CD14-positive monocyte (primary cell): ENCODE measurements at regions of chr11 and their contacts with region 1.

Region 1: GRCh38 chr11:10916674-10917073 is 58.8 kb upstream of the ZBED5 start:
- DNase-seq: peak; percentile 62 to 83 (median 81)
- H3K4me3 ChIP-seq: no peak overlapping the region
- H3K4me3 Mint-ChIP-seq: no peak overlapping the region
- H3K27ac ChIP-seq: peak overlapping the region in 1 of 2 donors; percentile 69
- H3K27ac Mint-ChIP-seq: peak overlapping the region in 6 of 7 donors; percentile 67 to 84 (median 76)
- H3K4me1 ChIP-seq: peaks cover 26 to 49% of the 10 kb centered on the region in 2 donors
- H3K4me1 Mint-ChIP-seq: peaks cover 49% of the 10 kb centered on the region
- H3K27me3 ChIP-seq: no peaks in the 10 kb centered on the region
- H3K27me3 Mint-ChIP-seq: peaks cover 1 to 4% (median 2%) of the 10 kb centered on the region in 3 donors
- CTCF ChIP-seq: no peak

Region 2: GRCh38 chr11:10857709-10858438 is 58.8 kb before region 1 on chr11 and contains the start of gene ZBED5:
- intact Hi-C with region 1: loop called in 1 of 2 experiments (anchors 5 kb)
- DNase-seq: peak; percentile 93 to 96 (median 94)
- H3K4me3 ChIP-seq: peak within 1 kb of the TSS; percentile 78 to 91 (median 91)
- H3K4me3 Mint-ChIP-seq: peak within 1 kb of the TSS; percentile 98 to 100
- H3K27ac ChIP-seq: peak within 1 kb of the TSS; percentile 94 to 95
- H3K27ac Mint-ChIP-seq: peak within 1 kb of the TSS; percentile 99 to 100 (median 99)
- H3K4me1 ChIP-seq: peaks cover 20 to 30% of the 10 kb centered on the region in 2 donors
- H3K4me1 Mint-ChIP-seq: peaks cover 21% of the 10 kb centered on the region
- H3K27me3 ChIP-seq: no peaks in the 10 kb centered on the region
- H3K27me3 Mint-ChIP-seq: peaks cover 0 to 3% (median 0%) of the 10 kb centered on the region in 3 donors
- CTCF ChIP-seq: no peak
- polyA plus RNA-seq, gene ZBED5: 8.1 to 45.8 (median 10.3) TPM

Region 3: DNA sequence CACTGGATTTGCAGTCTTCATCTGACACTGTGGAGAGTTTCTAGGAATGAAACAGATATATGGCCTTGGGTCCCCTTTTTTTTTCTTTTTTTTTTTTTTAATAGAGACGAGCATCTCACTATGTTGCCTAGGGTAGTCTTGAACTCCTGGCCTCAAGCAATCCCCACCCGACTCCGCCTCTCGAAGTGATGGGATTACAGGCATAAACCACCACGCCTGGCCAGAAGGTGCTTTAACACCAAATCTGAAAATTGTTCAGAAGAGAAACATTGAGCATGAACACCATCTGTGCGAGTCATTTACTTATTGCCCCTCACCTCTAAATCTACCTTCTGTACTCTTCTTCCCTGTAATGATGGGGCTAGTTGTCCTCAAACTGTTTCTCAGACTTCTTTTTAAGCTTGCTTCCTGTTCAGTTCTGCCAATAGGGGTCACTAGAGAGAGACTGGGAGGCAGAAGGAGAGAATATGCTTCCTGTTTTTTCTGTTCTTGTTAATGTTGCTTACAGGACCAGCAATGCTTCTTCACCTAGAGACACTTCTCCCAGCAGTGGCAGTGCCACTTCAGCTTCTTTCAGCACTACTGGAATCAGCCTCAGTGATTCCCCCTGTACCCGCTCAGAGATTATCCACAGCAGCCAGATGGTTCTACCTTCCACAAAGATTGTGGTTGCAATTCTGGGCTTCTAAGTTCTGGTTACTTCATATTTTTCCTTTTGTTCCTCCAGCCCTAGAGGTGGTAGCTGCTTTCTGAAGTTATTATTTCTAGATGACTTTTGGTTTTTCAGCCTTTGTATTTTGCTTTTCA is 38.1 kb before region 1 on chr11:
- intact Hi-C with region 1: loop called in 1 of 2 experiments (anchors 5 kb)
- DNase-seq: peak; percentile 75 to 82 (median 78)
- H3K4me3 ChIP-seq: no peak overlapping the region
- H3K4me3 Mint-ChIP-seq: no peak overlapping the region
- H3K27ac ChIP-seq: peak overlapping the region in 1 of 2 donors; percentile 61
- H3K27ac Mint-ChIP-seq: peak overlapping the region; percentile 75 to 90 (median 77)
- H3K4me1 ChIP-seq: peaks cover 3 to 7% of the 10 kb centered on the region in 2 donors
- H3K4me1 Mint-ChIP-seq: peaks cover 9% of the 10 kb centered on the region
- H3K27me3 ChIP-seq: no peaks in the 10 kb centered on the region
- H3K27me3 Mint-ChIP-seq: no peaks in the 10 kb centered on the region
- CTCF ChIP-seq: peak; percentile 86

Region 4: GRCh38 chr11:10899121-10899830 is 17.4 kb before region 1 on chr11:
- intact Hi-C with region 1: loop called in 1 of 2 experiments (anchors 2 kb)
- DNase-seq: peak; percentile 54 to 86 (median 71)
- H3K4me3 ChIP-seq: peak overlapping the region in 1 of 3 experiments; percentile 28
- H3K4me3 Mint-ChIP-seq: peak overlapping the region; percentile 41 to 46
- H3K27ac ChIP-seq: peak overlapping the region; percentile 89 to 100
- H3K27ac Mint-ChIP-seq: peak overlapping the region; percentile 99 to 100 (median 99)
- H3K4me1 ChIP-seq: peaks cover 57 to 65% of the 10 kb centered on the region in 2 donors
- H3K4me1 Mint-ChIP-seq: peaks cover 61% of the 10 kb centered on the region
- H3K27me3 ChIP-seq: no peaks in the 10 kb centered on the region
- H3K27me3 Mint-ChIP-seq: peaks cover 0 to 7% (median 2%) of the 10 kb centered on the region in 3 donors
- CTCF ChIP-seq: no peak

Region 5: GRCh38 chr11:10955616-10956015 is 38.9 kb after region 1 on chr11:
- intact Hi-C with region 1: no loop called
- DNase-seq: no peak
- H3K4me3 ChIP-seq: no peak overlapping the region
- H3K4me3 Mint-ChIP-seq: no peak overlapping the region
- H3K27ac ChIP-seq: no peak overlapping the region
- H3K27ac Mint-ChIP-seq: no peak overlapping the region
- H3K4me1 ChIP-seq: no peaks in the 10 kb centered on the region
- H3K4me1 Mint-ChIP-seq: peaks cover 5% of the 10 kb centered on the region
- H3K27me3 ChIP-seq: no peaks in the 10 kb centered on the region
- H3K27me3 Mint-ChIP-seq: peaks cover 2 to 5% (median 4%) of the 10 kb centered on the region in 3 donors
- CTCF ChIP-seq: no peak